Activated naive CD4-positive, alpha-beta T cell treated with anti-CD3 and anti-CD28 coated beads for 36 hours (primary cell): ENCODE measurements at regions of chr20 and their contacts with region 1.

Region 1: GRCh38 chr20:50546729-50547314 is 36.6 kb downstream of the PTPN1 start:
- DNase-seq: peak; percentile 63
- H3K4me3 Mint-ChIP-seq: peak overlapping the region; percentile 64
- H3K27ac Mint-ChIP-seq: peak overlapping the region; percentile 94
- H3K4me1 Mint-ChIP-seq: peaks cover 70% of the 10 kb centered on the region
- H3K27me3 Mint-ChIP-seq: no peaks in the 10 kb centered on the region

Region 2: GRCh38 chr20:50248063-50248641 is 298.7 kb before region 1 on chr20:
- CTCF ChIA-PET with region 1: no interaction called
- intact Hi-C with region 1: no loop called
- DNase-seq: no peak
- H3K4me3 Mint-ChIP-seq: no peak overlapping the region
- H3K27ac Mint-ChIP-seq: no peak overlapping the region
- H3K4me1 Mint-ChIP-seq: no peaks in the 10 kb centered on the region
- H3K27me3 Mint-ChIP-seq: no peaks in the 10 kb centered on the region

Region 3: DNA sequence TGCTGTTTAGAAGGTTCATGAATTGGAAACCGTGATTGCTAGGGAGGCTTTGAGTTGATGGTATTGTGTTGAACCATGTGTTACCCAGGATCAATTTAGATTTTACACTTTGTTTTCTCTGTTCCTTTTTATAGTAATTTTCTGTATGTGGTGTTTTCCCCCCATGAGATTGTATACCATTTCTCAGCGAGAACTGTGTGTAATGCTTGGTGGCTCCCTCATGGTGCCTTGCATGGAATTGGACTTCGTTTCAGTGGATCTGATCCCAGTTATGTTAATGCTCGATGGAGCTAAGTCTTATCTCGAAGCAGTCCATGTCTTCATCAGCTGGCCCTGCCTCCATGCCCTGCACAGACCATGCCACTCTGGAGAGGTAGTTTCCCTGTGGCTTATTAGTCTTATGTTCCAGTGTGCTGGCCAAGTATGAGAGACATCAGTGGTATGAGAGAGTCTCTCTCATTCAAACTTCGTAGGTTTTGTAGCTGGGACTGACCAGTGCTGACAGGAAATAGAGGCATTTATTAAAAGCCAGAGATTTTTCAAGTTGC is 17.9 kb before region 1 on chr20:
- CTCF ChIA-PET with region 1: interaction called, 3 read pairs
- intact Hi-C with region 1: loop called (anchors 1 kb)
- DNase-seq: peak; percentile 24
- H3K4me3 Mint-ChIP-seq: no peak overlapping the region
- H3K27ac Mint-ChIP-seq: no peak overlapping the region
- H3K4me1 Mint-ChIP-seq: peaks cover 31% of the 10 kb centered on the region
- H3K27me3 Mint-ChIP-seq: no peaks in the 10 kb centered on the region

Region 4: DNA sequence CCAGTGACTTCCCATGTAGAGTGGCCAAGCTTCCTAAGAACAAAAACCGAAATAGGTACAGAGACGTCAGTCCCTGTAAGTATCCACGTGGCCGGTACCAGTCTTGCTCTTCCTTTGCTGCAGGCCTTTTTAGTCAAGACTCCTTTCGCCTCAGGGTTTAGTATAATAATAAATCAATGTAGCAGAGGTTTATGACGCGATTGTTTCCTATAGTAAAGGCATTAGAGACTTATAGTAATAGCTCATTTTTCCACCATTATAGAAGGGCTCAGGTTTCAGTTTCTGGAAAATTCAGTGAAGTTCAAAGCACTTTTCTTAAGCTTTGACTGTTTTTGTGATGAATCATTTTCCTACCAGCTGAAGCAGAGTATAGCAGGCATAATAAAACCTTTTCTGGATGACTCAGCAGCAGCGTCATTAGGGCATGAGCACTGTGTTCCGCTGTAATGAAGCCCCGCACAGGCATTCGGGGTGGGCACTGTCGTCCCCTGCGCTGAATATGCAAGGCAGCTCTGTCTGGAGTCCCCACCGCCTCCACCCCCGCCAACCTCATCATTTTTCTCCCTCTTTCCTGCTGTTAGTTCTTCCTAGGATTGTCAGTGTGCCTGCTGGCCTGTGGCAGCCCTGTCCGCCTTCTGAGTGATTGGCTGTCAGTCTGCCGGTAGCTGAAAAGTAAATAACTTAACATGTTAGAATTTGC is 14.7 kb after region 1 on chr20:
- CTCF ChIA-PET with region 1: interaction called, 12 read pairs
- intact Hi-C with region 1: loop called (anchors 1 kb)
- DNase-seq: peak; percentile 85
- H3K4me3 Mint-ChIP-seq: peak overlapping the region; percentile 89
- H3K27ac Mint-ChIP-seq: peak overlapping the region; percentile 99
- H3K4me1 Mint-ChIP-seq: peaks cover 87% of the 10 kb centered on the region
- H3K27me3 Mint-ChIP-seq: no peaks in the 10 kb centered on the region

Region 5: GRCh38 chr20:50569864-50570836 is 23.3 kb after region 1 on chr20:
- CTCF ChIA-PET with region 1: interaction called, 6 read pairs
- intact Hi-C with region 1: loop called (anchors 1 kb)
- DNase-seq: peak; percentile 83
- H3K4me3 Mint-ChIP-seq: peak overlapping the region; percentile 23
- H3K27ac Mint-ChIP-seq: peak overlapping the region; percentile 91
- H3K4me1 Mint-ChIP-seq: peaks cover 84% of the 10 kb centered on the region
- H3K27me3 Mint-ChIP-seq: no peaks in the 10 kb centered on the region

Region 6: GRCh38 chr20:50680412-50680908 is 133.6 kb after region 1 on chr20:
- CTCF ChIA-PET with region 1: no interaction called
- intact Hi-C with region 1: no loop called
- DNase-seq: no peak
- H3K4me3 Mint-ChIP-seq: no peak overlapping the region
- H3K27ac Mint-ChIP-seq: no peak overlapping the region
- H3K4me1 Mint-ChIP-seq: no peaks in the 10 kb centered on the region
- H3K27me3 Mint-ChIP-seq: peaks cover 2% of the 10 kb centered on the region